ENCODE measurements at regions of chr12 and their contacts with region 1.

Region 1: GRCh38 chr12:115632308-115632707 is 645.2 kb downstream of the MED13L start:
- DNase-seq: no peak
- ATAC-seq: no peak
- H3K4me3 ChIP-seq: no peak overlapping the region
- H3K27ac ChIP-seq: no peak overlapping the region
- H3K4me1 ChIP-seq: no peaks in the 10 kb centered on the region
- H3K27me3 ChIP-seq: no peaks in the 10 kb centered on the region

Region 2: GRCh38 chr12:114668151-114668885 is 964.0 kb before region 1 on chr12:
- intact Hi-C with region 1: loop called in 1 of 4 experiments (anchors 5 kb)
- DNase-seq: peak; percentile 81 to 87 (median 86)
- ATAC-seq: peak; percentile 88 to 91
- H3K4me3 ChIP-seq: peak overlapping the region; percentile 64
- H3K27ac ChIP-seq: no peak overlapping the region
- H3K4me1 ChIP-seq: peaks cover 3% of the 10 kb centered on the region
- H3K27me3 ChIP-seq: no peaks in the 10 kb centered on the region